Dendritic cell treated with granulocyte-macrophage colony-stimulating factor and Interleukin-4, amounts not matched to agents 40 ng/mL and 50 ng/mL, for 4 days (primary cell): ENCODE measurements at regions of chr14 and their contacts with region 1.

Region 1: GRCh38 chr14:92717571-92718042 is 30.8 kb downstream of the LGMN start:
- H3K4me3 Mint-ChIP-seq: no peak overlapping the region
- H3K27ac Mint-ChIP-seq: no peak overlapping the region
- H3K4me1 Mint-ChIP-seq: peaks cover 14% of the 10 kb centered on the region
- H3K27me3 Mint-ChIP-seq: peaks cover 8% of the 10 kb centered on the region

Region 2: GRCh38 chr14:92748259-92749016 is 30.8 kb after region 1 on chr14 and contains the start of gene LGMN:
- intact Hi-C with region 1: loop called (anchors 5 kb)
- H3K4me3 Mint-ChIP-seq: peak within 1 kb of the TSS; percentile 82
- H3K27ac Mint-ChIP-seq: peak within 1 kb of the TSS; percentile 93
- H3K4me1 Mint-ChIP-seq: peaks cover 65% of the 10 kb centered on the region
- H3K27me3 Mint-ChIP-seq: peaks cover 64% of the 10 kb centered on the region